ENCODE measurements at regions of chr2 and their contacts with region 1.

Region 1: GRCh38 chr2:143175438-143175837 is 46.2 kb downstream of the ARHGAP15 start:
- DNase-seq: peak; percentile 63
- H3K4me3 Mint-ChIP-seq: no peak overlapping the region
- H3K27ac Mint-ChIP-seq: peak overlapping the region; percentile 67
- H3K4me1 Mint-ChIP-seq: peaks cover 45% of the 10 kb centered on the region
- H3K27me3 Mint-ChIP-seq: no peaks in the 10 kb centered on the region

Region 2: DNA sequence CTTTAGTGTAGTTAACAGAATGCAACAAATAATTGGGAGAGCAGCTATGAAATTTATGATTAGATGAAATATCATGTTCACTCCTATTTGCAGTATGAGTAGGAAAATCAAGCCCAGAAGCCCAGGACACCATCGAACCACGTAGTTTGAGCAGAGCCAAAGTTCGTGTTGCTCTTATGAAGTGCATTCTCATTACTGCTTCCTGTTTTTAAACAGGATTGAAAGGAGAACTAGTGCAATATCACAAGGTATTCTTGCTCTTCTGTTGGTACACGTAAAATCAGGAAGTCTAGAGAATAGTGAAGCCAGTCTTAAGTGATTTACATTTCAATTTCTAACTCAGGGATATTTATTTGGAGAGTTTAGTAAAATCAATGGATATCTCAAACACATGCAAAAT is 25.2 kb before region 1 on chr2:
- intact Hi-C with region 1: loop called (anchors 2 kb)
- DNase-seq: no peak
- H3K4me3 Mint-ChIP-seq: peak overlapping the region; percentile 63
- H3K27ac Mint-ChIP-seq: peak overlapping the region; percentile 87
- H3K4me1 Mint-ChIP-seq: peaks cover 68% of the 10 kb centered on the region
- H3K27me3 Mint-ChIP-seq: no peaks in the 10 kb centered on the region

Region 3: DNA sequence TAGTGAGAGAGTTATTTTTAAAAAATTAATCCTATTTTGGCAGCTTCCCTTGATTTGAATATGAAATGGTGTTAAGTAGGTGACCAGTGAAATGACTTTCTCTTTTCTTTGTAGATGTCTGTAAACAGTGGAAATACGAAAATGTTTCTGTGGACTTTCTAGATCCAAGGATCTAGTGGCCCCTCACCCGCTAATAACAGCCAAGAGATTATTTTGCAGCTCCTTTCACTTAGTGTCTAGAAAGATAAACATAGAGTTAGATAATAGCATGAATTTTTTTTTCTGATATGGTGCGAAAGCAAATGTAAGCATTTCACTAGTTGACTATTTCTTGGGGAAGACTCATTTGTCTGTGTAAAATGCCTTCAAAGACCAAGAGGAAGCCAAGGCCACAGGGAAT is 11.4 kb after region 1 on chr2:
- intact Hi-C with region 1: no loop called
- DNase-seq: no peak
- H3K4me3 Mint-ChIP-seq: no peak overlapping the region
- H3K27ac Mint-ChIP-seq: no peak overlapping the region
- H3K4me1 Mint-ChIP-seq: peaks cover 26% of the 10 kb centered on the region
- H3K27me3 Mint-ChIP-seq: no peaks in the 10 kb centered on the region

Region 4: GRCh38 chr2:143205106-143205764 is 29.8 kb after region 1 on chr2:
- intact Hi-C with region 1: loop called (anchors 1 kb)
- DNase-seq: peak; percentile 70
- H3K4me3 Mint-ChIP-seq: peak overlapping the region; percentile 9
- H3K27ac Mint-ChIP-seq: peak overlapping the region; percentile 68
- H3K4me1 Mint-ChIP-seq: peaks cover 47% of the 10 kb centered on the region
- H3K27me3 Mint-ChIP-seq: no peaks in the 10 kb centered on the region

Region 5: GRCh38 chr2:143264851-143265250 is 89.4 kb after region 1 on chr2:
- intact Hi-C with region 1: no loop called
- DNase-seq: no peak
- H3K4me3 Mint-ChIP-seq: no peak overlapping the region
- H3K27ac Mint-ChIP-seq: no peak overlapping the region
- H3K4me1 Mint-ChIP-seq: peaks cover 31% of the 10 kb centered on the region
- H3K27me3 Mint-ChIP-seq: no peaks in the 10 kb centered on the region

Region 6: DNA sequence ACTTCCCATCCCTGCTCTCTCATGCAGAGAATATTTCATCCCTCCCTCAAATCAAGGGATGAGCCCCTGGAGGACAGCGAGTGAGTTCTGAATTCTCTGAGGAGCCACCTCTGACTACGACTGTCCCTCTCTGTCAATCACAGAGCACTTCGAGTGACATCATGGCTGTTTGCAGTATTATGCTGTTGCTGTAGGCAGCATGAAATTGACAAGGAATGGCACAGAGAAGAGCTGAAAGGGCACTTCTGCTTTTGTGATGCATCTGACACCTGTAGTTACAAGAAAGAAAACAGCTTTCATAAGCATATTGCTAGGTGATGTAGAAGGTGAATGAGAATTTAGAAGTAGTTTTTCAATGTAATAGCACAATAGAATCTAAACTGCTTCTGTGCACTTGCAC is 120.7 kb after region 1 on chr2:
- intact Hi-C with region 1: no loop called
- DNase-seq: no peak
- H3K4me3 Mint-ChIP-seq: no peak overlapping the region
- H3K27ac Mint-ChIP-seq: no peak overlapping the region
- H3K4me1 Mint-ChIP-seq: peaks cover 5% of the 10 kb centered on the region
- H3K27me3 Mint-ChIP-seq: no peaks in the 10 kb centered on the region

Measured in activated CD4-positive, alpha-beta T cell treated with anti-CD3 and anti-CD28 coated beads, Interleukin-2, amount 10 ng/mL, durations not matched to agents 24 days and 14 days (primary cell).